ENCODE measurements at regions of chr2 and their contacts with region 1.

Region 1: GRCh38 chr2:41853427-41854216 is 194.2 kb upstream of the PKDCC start:
- H3K4me3 ChIP-seq: no peak overlapping the region
- H3K27ac ChIP-seq: no peak overlapping the region
- H3K4me1 ChIP-seq: no peaks in the 10 kb centered on the region
- CTCF ChIP-seq: peak; percentile 43

Region 2: DNA sequence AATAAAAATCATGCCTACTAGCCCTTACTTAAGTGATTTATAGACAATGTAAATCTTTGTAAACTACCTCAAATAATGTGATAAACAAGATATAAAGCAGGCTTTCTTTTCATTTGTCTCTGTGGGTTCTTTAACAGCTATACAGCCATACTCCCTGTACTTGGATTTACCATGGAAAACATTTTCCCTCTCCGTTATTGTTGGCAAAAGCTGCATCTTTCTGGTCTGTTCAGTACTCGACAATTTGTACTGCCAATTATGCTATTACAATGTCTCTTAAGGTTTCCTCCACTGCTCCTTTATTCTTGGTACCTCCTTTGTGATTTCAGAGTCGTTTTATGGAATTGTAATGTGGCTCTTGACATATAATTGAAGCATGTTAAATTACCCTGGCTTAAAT is 232.1 kb before region 1 on chr2:
- CTCF ChIA-PET with region 1: no interaction called
- POLR2A ChIA-PET with region 1: no interaction called
- H3K4me3 ChIP-seq: no peak overlapping the region
- H3K27ac ChIP-seq: no peak overlapping the region
- H3K4me1 ChIP-seq: no peaks in the 10 kb centered on the region
- CTCF ChIP-seq: no peak

Region 3: DNA sequence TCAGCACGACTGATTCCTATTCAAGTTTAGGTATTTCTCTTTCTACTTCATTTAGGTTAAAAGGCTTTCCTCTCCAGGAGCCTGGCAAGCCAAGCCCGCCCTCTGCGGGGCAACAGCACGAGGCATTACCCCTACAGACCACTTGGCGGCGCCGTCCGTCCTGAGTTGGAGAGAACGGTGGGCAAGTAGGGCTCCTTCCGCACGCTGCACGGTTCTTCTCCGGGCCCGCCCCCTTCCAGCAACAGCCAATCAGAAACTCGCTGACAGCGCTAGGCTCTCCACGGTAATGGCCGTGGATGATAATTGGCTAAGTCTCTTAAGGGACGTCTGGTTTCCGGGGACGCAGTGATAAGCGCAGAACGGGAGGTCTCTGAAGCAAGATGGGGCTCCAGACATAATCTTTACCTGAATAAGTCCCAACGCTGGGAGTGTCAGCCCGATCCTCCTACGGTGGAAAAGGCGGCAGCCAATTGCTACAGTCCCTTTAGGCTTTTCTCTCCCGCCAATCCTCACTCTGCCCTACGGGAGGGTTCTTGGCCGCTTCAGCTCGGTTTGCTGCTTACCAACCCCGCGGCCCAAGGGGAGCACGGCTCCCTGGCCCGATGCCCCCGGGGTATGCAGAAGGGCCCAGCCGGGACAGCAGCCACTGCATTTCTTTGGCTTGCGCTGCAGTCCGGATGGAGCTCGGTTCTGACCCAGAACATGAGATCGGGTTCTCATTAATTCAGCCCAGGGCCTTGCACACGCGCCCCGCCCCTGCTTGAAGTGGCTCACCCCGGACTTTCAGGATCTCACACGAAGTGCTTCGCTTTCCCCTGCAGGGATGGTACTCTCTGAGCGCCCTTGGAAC is 12.7 kb before region 1 on chr2:
- CTCF ChIA-PET with region 1: interaction called, 30 read pairs
- POLR2A ChIA-PET with region 1: no interaction called
- H3K4me3 ChIP-seq: peak overlapping the region; percentile 61
- H3K27ac ChIP-seq: peak overlapping the region; percentile 65; the same call in 1 of the 2 replicates
- H3K4me1 ChIP-seq: 0 out of 2 replicates have a peak, but pooled peaks cover 4% of the 10 kb centered on the region
- CTCF ChIP-seq: peak; percentile 96

Region 4: DNA sequence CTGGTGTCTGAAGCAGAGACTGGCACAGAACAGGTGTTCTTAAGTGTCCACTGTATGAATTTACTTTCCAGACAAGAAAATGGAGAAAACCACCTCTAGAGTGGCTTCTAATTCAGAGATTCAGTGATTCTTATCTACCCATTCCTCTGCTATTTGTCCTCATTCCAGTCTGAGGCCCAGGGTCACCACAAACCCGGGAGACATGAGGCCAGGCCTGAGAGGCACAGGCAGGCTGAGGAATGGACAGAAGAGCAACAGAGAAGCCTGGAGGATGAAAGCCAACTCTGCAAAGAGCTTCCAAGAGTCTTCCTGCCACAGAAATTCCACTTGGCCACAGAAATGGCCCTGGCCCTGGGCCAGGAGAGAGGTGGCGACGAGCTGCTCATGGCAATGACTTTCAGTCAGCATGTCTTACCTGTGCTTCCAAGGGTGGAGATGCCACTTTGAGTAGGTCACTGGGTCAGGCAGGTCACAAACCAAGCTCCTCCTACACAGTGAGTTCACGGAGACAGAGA is 38.8 kb after region 1 on chr2:
- CTCF ChIA-PET with region 1: no interaction called
- POLR2A ChIA-PET with region 1: no interaction called
- H3K4me3 ChIP-seq: no peak overlapping the region
- H3K27ac ChIP-seq: no peak overlapping the region
- H3K4me1 ChIP-seq: no peaks in the 10 kb centered on the region
- CTCF ChIP-seq: no peak

Measured in HEK293 (cell line).